Activated CD4-positive, alpha-beta T cell treated with anti-CD3 and anti-CD28 coated beads for 36 hours (primary cell): ENCODE measurements at regions of chr19 and their contacts with region 1.

Region 1: DNA sequence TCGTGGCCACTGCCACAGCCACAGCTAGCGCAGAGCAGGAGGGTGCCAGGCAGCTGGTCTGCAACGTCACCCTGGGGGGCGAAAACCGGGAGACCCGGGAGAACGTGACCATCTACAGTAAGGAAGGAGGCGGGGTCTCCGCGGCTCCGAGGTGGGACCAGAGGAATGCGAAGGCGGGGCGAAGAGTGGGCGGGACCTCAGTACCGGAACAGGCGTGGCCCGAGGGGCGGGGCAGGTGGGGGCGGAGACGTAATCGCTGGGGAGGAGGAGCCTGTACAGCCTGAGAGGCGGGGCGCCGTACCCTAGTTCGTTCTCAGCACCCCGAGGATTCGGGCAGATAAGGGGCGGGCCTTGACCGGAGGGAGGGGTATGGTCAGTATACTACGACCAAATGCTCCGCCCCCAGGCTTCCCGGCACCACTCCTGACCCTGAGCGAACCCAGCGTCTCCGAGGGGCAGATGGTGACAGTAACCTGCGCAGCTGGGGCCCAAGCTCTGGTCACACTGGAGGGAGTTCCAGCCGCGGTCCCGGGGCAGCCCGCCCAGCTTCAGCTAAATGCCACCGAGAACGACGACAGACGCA is 2.5 kb downstream of the ICAM5 start:
- DNase-seq: peak; percentile 92
- ATAC-seq: peak; percentile 63
- H3K4me3 Mint-ChIP-seq: peak overlapping the region; percentile 66
- H3K27ac Mint-ChIP-seq: no peak overlapping the region
- H3K4me1 Mint-ChIP-seq: peaks cover 59% of the 10 kb centered on the region
- H3K27me3 Mint-ChIP-seq: peaks cover 70% of the 10 kb centered on the region

Region 2: DNA sequence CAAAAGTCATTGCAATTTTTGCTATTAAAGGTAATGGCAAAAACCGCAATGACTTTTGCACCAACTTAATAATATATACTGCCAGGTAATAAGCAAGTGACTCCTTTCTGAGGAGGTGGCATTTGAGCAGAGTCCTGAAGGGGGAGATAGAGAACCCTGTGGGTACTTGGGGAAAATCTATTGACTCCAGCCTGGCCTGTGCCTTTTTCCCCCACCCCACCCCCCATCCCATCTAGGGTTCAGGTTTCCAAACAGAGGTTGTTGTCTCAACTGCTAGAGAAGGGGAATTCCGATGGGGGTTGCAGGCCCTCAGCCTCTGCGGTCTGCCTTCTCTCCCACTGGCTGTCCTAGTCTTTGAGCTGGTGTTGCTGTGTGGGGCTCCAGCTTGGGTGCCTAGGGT is 72.6 kb before region 1 on chr19:
- CTCF ChIA-PET with region 1: no interaction called
- POLR2A ChIA-PET with region 1: no interaction called
- intact Hi-C with region 1: no loop called
- DNase-seq: peak; percentile 59
- ATAC-seq: peak; percentile 86
- H3K4me3 Mint-ChIP-seq: no peak overlapping the region
- H3K27ac Mint-ChIP-seq: no peak overlapping the region
- H3K4me1 Mint-ChIP-seq: peaks cover 2% of the 10 kb centered on the region
- H3K27me3 Mint-ChIP-seq: no peaks in the 10 kb centered on the region

Region 3: GRCh38 chr19:10230861-10231611 is 61.3 kb before region 1 on chr19 and contains the start of gene S1PR2:
- CTCF ChIA-PET with region 1: no interaction called
- POLR2A ChIA-PET with region 1: no interaction called
- intact Hi-C with region 1: loop called in 1 of 2 experiments (anchors 1 kb)
- DNase-seq: peak; percentile 83
- ATAC-seq: peak; percentile 62
- H3K4me3 Mint-ChIP-seq: peak within 1 kb of the TSS; percentile 81
- H3K27ac Mint-ChIP-seq: peak within 1 kb of the TSS; percentile 84
- H3K4me1 Mint-ChIP-seq: peaks cover 24% of the 10 kb centered on the region
- H3K27me3 Mint-ChIP-seq: no peaks in the 10 kb centered on the region
- total RNA-seq, gene S1PR2: 8.1 to 9.0 TPM

Region 4: GRCh38 chr19:10510301-10510802 is 218.1 kb after region 1 on chr19:
- CTCF ChIA-PET with region 1: no interaction called
- POLR2A ChIA-PET with region 1: no interaction called
- intact Hi-C with region 1: loop called (anchors 5 to 10 kb)
- DNase-seq: peak; percentile 74
- ATAC-seq: no peak
- H3K4me3 Mint-ChIP-seq: no peak overlapping the region
- H3K27ac Mint-ChIP-seq: no peak overlapping the region
- H3K4me1 Mint-ChIP-seq: peaks cover 16% of the 10 kb centered on the region
- H3K27me3 Mint-ChIP-seq: peaks cover 20% of the 10 kb centered on the region

Region 5: DNA sequence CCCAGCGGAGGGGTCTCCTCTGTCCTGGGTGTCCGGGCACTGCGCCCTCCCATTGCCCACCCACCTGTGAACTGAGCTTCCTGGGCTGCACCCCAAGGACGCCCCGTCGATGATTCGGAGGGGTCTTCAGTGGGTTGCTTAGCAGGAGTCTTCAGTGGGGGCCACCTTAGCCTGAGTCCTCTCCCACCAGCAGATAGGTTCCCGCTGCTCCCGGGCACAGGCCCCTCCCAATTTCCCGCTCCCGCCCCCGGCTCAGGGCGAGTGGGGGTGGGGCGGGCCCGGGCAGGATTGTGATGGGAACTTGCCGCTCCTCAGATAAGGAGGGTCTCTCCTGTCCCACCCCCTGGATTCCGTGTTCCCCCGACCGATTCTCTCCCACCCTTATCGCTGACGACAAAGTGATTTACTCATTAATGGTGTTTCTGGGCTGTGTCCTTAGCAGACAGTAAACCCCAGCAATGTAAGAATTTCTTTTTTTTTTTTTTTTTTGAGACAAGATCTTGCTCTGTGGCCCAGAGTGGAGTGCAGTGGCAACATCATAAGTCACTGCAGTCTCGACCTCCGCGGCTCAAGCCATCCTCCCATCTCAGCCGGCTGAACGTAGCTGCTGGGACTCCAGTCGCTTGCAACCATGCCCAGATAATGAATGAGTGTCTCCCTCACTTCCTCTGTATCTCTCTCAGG is 225.6 kb after region 1 on chr19:
- CTCF ChIA-PET with region 1: no interaction called
- POLR2A ChIA-PET with region 1: no interaction called
- intact Hi-C with region 1: loop called (anchors 5 to 10 kb)
- DNase-seq: no peak
- ATAC-seq: peak; percentile 43
- H3K4me3 Mint-ChIP-seq: peak overlapping the region; percentile 15
- H3K27ac Mint-ChIP-seq: no peak overlapping the region
- H3K4me1 Mint-ChIP-seq: peaks cover 24% of the 10 kb centered on the region
- H3K27me3 Mint-ChIP-seq: peaks cover 53% of the 10 kb centered on the region

Region 6: GRCh38 chr19:10631874-10632273 is 339.6 kb after region 1 on chr19:
- CTCF ChIA-PET with region 1: no interaction called
- POLR2A ChIA-PET with region 1: no interaction called
- intact Hi-C with region 1: no loop called
- DNase-seq: no peak
- ATAC-seq: no peak
- H3K4me3 Mint-ChIP-seq: no peak overlapping the region
- H3K27ac Mint-ChIP-seq: no peak overlapping the region
- H3K4me1 Mint-ChIP-seq: no peaks in the 10 kb centered on the region
- H3K27me3 Mint-ChIP-seq: no peaks in the 10 kb centered on the region